ENCODE measurements at regions of chr10 and their contacts with region 1.

Region 1: GRCh38 chr10:101272229-101272868 is 43.1 kb upstream of the LBX1 start:
- DNase-seq: peak in 4 of 5 donors; percentile 38 to 50 (median 45)
- H3K4me3 ChIP-seq: no peak overlapping the region
- H3K4me3 Mint-ChIP-seq: no peak overlapping the region
- H3K27ac ChIP-seq: no peak overlapping the region
- H3K27ac Mint-ChIP-seq: no peak overlapping the region
- H3K4me1 ChIP-seq: no peaks in the 10 kb centered on the region
- H3K4me1 Mint-ChIP-seq: peaks cover 0 to 7% (median under 1%) of the 10 kb centered on the region in 4 donors
- H3K27me3 ChIP-seq: no peaks in the 10 kb centered on the region
- H3K27me3 Mint-ChIP-seq: peaks cover 16 to 26% of the 10 kb centered on the region in 2 donors

Region 2: GRCh38 chr10:101441541-101442455 is 169.4 kb after region 1 on chr10:
- CTCF ChIA-PET with region 1: interaction called, 16 read pairs
- POLR2A ChIA-PET with region 1: no interaction called
- intact Hi-C with region 1: loop called (anchors 2 kb)
- DNase-seq: peak; percentile 18 to 48 (median 31)
- H3K4me3 ChIP-seq: no peak overlapping the region
- H3K4me3 Mint-ChIP-seq: no peak overlapping the region
- H3K27ac ChIP-seq: no peak overlapping the region
- H3K27ac Mint-ChIP-seq: peak overlapping the region in 2 of 7 donors; percentile 5 to 19
- H3K4me1 ChIP-seq: no peaks in the 10 kb centered on the region
- H3K4me1 Mint-ChIP-seq: peaks cover 0 to 5% (median 4%) of the 10 kb centered on the region in 4 donors
- H3K27me3 ChIP-seq: no peaks in the 10 kb centered on the region
- H3K27me3 Mint-ChIP-seq: no peaks in the 10 kb centered on the region

Measured in CD4-positive, alpha-beta memory T cell (primary cell).